ENCODE measurements at regions of chr17 and their contacts with region 1.

Region 1: DNA sequence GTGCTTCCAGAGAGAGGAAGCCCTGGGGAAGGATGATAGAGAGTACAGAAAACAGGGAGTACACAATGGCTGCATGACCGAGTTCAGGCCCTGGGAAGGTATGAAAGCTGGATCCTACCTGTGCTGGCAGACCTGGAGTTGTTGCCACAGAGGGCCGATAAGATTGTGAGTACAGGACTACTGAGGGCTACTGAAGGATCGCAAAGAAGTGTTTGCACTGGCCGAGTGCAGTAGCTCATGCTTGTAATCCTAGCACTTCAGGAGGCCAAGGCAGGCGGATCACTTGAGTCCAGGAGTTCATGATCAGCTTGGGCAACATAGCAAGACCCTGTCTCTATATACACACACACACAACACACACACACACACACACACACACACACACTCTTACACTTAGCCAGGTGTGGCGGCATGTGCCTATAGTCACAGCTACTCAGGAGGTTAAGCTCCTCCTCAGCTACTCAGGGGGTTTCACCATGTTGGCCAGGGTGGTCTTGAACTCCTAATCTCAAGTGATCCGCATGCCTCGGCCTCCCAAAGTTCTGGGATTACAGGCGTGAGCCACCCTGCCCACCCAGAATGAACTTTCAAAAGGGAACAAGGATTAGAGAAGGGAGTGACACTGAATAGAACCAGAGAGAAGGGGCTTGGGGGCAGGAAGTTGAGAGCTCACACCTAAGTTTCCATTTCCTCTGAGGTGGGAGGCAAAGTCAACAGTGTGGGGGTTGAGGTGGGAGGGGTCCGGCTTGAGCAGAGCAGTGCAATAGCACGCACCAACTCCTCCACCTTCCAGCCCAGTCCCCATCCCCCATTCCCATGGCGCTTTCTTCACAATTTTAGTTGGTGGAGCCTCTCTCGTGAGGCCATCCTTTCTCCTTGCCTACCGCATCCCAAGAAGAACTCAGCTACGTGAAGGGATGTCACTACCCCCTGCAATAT is 7.5 kb downstream of the SCIMP start:
- DNase-seq: peak; percentile 20 to 76 (median 46)
- H3K4me3 ChIP-seq: peak overlapping the region; percentile 32
- H3K4me3 Mint-ChIP-seq: peak overlapping the region; percentile 65 to 92 (median 86)
- H3K27ac ChIP-seq: peak overlapping the region; percentile 47
- H3K27ac Mint-ChIP-seq: peak overlapping the region; percentile 85 to 99 (median 97)
- H3K4me1 ChIP-seq: peaks cover 38% of the 10 kb centered on the region
- H3K4me1 Mint-ChIP-seq: peaks cover 50 to 74% (median 70%) of the 10 kb centered on the region in 3 donors
- H3K27me3 ChIP-seq: no peaks in the 10 kb centered on the region
- H3K27me3 Mint-ChIP-seq: peaks cover 0 to 2% of the 10 kb centered on the region in 2 donors

Region 2: GRCh38 chr17:5191541-5192417 is 35.4 kb before region 1 on chr17 and contains the start of gene ZNF594:
- CTCF ChIA-PET with region 1: interaction called, 14 read pairs
- POLR2A ChIA-PET with region 1: interaction called, 3 read pairs
- DNase-seq: peak; percentile 95 to 98 (median 96)
- H3K4me3 ChIP-seq: peak within 1 kb of the TSS; percentile 92
- H3K4me3 Mint-ChIP-seq: peak within 1 kb of the TSS; percentile 91 to 99 (median 94)
- H3K27ac ChIP-seq: peak within 1 kb of the TSS; percentile 75
- H3K27ac Mint-ChIP-seq: peak within 1 kb of the TSS; percentile 90 to 98 (median 94)
- H3K4me1 ChIP-seq: peaks cover 16% of the 10 kb centered on the region
- H3K4me1 Mint-ChIP-seq: peaks cover 31 to 42% (median 38%) of the 10 kb centered on the region in 3 donors
- H3K27me3 ChIP-seq: no peaks in the 10 kb centered on the region
- H3K27me3 Mint-ChIP-seq: no peaks in the 10 kb centered on the region
- total RNA-seq, gene ZNF594: 11.7 to 14.9 TPM

Region 3: GRCh38 chr17:5237541-5238016 is 10.4 kb after region 1 on chr17:
- CTCF ChIA-PET with region 1: interaction called, 25 read pairs
- POLR2A ChIA-PET with region 1: interaction called, 17 read pairs
- DNase-seq: peak in 4 of 5 donors; percentile 7 to 58 (median 30)
- H3K4me3 ChIP-seq: no peak overlapping the region
- H3K4me3 Mint-ChIP-seq: peak overlapping the region in 5 of 7 donors; percentile 8 to 59 (median 54)
- H3K27ac ChIP-seq: peak overlapping the region; percentile 41
- H3K27ac Mint-ChIP-seq: peak overlapping the region; percentile 70 to 96 (median 82)
- H3K4me1 ChIP-seq: peaks cover 39% of the 10 kb centered on the region
- H3K4me1 Mint-ChIP-seq: peaks cover 52 to 63% (median 56%) of the 10 kb centered on the region in 3 donors
- H3K27me3 ChIP-seq: no peaks in the 10 kb centered on the region
- H3K27me3 Mint-ChIP-seq: no peaks in the 10 kb centered on the region

Region 4: DNA sequence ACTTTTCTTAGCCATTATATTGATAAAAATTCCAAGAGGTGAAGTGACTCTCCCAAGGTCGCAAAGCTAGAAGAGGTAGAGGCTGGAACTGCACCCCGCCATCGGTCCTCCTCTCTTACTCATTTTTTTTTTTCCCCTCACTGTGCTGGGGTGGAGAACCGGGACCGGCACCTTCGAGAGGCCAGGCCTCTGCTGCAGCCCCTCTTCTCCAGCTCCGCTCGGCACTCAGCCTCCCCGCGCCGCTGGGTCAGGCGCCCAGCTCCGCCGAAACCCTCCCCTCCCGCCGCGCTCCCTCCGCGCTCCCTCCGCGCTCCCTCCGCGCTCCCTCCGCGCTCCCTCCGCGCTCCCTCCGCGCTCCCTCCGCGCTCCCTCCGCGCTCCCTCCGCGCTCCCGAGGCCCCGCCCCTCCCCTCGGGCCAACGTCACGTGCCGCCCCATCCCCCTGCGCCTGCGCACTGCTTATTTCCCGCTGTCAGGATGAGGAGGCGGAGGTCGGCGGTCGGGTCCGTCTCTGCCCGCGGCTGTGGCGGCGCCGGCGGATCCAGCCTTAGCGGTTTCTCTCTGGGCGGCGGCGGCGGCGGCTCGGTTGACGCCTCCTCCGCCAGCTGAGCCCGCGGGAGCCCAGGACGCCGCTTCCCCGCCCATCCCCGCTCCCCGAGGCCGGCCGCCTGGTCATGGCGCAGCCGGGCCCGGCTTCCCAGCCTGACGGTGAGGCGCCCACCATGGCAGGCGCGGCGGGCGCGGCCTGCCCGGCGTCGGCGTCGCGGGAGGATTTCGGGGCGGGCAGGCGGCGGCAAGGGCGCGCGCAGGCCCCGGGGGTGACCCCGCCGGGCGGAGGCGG is 54.8 kb after region 1 on chr17 and contains the start of gene RABEP1:
- CTCF ChIA-PET with region 1: no interaction called
- POLR2A ChIA-PET with region 1: interaction called, 10 read pairs
- DNase-seq: peak; percentile 90 to 95 (median 92)
- H3K4me3 ChIP-seq: peak within 1 kb of the TSS; percentile 83
- H3K4me3 Mint-ChIP-seq: peak within 1 kb of the TSS; percentile 86 to 97 (median 92)
- H3K27ac ChIP-seq: peak within 1 kb of the TSS; percentile 53
- H3K27ac Mint-ChIP-seq: peak within 1 kb of the TSS; percentile 71 to 99 (median 86)
- H3K4me1 ChIP-seq: peaks cover 38% of the 10 kb centered on the region
- H3K4me1 Mint-ChIP-seq: peaks cover 31 to 48% (median 40%) of the 10 kb centered on the region in 3 donors
- H3K27me3 ChIP-seq: no peaks in the 10 kb centered on the region
- H3K27me3 Mint-ChIP-seq: peaks cover 0 to 6% of the 10 kb centered on the region in 2 donors
- total RNA-seq, gene RABEP1: 60.9 to 64.0 TPM

Region 5: GRCh38 chr17:5381542-5381941 is 154.3 kb after region 1 on chr17:
- CTCF ChIA-PET with region 1: no interaction called
- POLR2A ChIA-PET with region 1: no interaction called
- DNase-seq: no peak
- H3K4me3 ChIP-seq: no peak overlapping the region
- H3K4me3 Mint-ChIP-seq: no peak overlapping the region
- H3K27ac ChIP-seq: no peak overlapping the region
- H3K27ac Mint-ChIP-seq: peak overlapping the region in 4 of 8 donors; percentile 48 to 93 (median 73)
- H3K4me1 ChIP-seq: no peaks in the 10 kb centered on the region
- H3K4me1 Mint-ChIP-seq: peaks cover 0 to 1% (median 0%) of the 10 kb centered on the region in 3 donors
- H3K27me3 ChIP-seq: no peaks in the 10 kb centered on the region
- H3K27me3 Mint-ChIP-seq: no peaks in the 10 kb centered on the region